OCI-LY7 (cell line): ENCODE measurements at regions of chr6 and their contacts with region 1.

Region 1: GRCh38 chr6:35327349-35328027 is 14.9 kb upstream of the PPARD start:
- DNase-seq: peak; percentile 83
- H3K4me3 ChIP-seq: no peak overlapping the region
- H3K27ac ChIP-seq: peak overlapping the region; percentile 18
- H3K4me1 ChIP-seq: peaks cover 20% of the 10 kb centered on the region
- CTCF ChIP-seq: peak; percentile 87

Region 2: GRCh38 chr6:35719830-35720733 is 392.6 kb after region 1 on chr6:
- CTCF ChIA-PET with region 1: interaction called, 16 read pairs
- POLR2A ChIA-PET with region 1: no interaction called
- intact Hi-C with region 1: no loop called
- DNase-seq: peak; percentile 83
- H3K4me3 ChIP-seq: peak overlapping the region; percentile 51
- H3K27ac ChIP-seq: peak overlapping the region; percentile 89
- H3K4me1 ChIP-seq: peaks cover 80% of the 10 kb centered on the region
- CTCF ChIP-seq: no peak